ENCODE measurements at regions of chr5 and their contacts with region 1.

Region 1: DNA sequence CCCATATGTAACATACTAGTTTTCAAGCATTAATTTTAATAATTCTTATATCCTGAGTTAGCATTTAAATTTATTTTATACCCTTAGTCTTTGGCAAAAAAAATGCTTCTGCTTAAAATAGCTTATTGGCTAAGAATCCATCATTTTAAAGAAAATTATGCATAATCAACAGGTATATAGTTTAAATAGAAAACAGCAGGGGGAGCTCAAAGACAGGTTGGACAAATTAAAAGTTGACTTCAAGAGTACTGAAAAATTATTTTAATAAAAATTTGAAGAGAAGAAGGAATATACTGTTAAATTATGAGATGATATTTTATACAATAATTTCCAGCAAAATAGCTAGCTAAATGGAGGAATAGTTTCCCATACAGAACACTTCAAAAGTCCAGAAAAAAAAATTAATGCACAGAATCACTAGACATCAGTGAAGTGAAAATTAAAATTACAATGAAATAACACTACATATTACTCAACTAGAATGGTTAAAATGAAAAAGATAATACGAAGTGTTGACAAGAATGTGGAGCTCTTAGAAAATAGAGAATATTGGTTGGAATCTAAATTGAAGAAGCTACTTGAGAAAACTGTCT is 387.1 kb downstream of the PDE4D start:
- DNase-seq: no peak
- ATAC-seq: peak; percentile 61; the same call in 2 of the 3 replicates
- H3K4me3 ChIP-seq: no peak overlapping the region
- H3K27ac ChIP-seq: no peak overlapping the region
- H3K4me1 ChIP-seq: no peaks in the 10 kb centered on the region
- H3K27me3 ChIP-seq: no peaks in the 10 kb centered on the region
- CTCF ChIP-seq: peak; percentile 10 to 48 (median 31); a peak in 2 of 6 replicates
- EP300 ChIP-seq: no peak
- POLR2A ChIP-seq: no peak
- RAD21 ChIP-seq: peak; percentile 77

Region 2: DNA sequence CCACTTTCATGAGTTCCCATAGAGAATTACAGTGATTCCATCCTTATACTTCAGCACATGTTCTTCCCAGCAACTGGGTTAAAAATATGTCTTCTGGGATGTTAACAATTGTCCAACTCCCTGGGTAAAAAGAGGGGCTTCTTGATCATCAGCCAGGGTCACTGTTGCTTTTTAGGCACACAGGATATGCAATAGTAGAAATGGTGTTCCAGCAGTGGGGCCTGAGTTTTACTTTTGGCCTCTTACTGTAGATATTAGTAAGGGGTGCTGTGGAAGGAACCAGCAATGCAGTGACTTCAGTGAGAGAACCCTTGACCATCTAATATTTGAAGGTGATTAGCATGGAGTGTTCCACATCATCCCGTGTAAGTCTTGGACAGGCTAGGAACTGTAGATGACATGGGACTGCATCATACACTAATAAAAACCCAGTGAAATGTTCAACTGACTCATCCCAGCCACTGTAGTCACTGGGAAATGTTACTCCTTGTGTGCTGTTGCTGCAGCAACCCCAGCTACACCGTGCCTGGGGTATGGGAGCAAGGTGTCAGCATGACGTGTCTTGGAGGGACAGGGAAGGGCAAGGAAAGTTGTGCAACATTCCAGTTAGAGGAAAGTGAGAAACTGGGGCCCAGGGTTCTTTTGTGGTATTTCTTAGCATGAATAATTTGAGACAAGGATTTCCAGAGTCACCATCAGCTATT is 312.6 kb before region 1 on chr5:
- CTCF ChIA-PET with region 1: no interaction called
- POLR2A ChIA-PET with region 1: no interaction called
- RAD21 ChIA-PET with region 1: no interaction called
- SMC1A ChIA-PET with region 1: no interaction called
- in situ Hi-C with region 1: no loop called
- intact Hi-C with region 1: no loop called
- DNase-seq: no peak
- ATAC-seq: no peak
- H3K4me3 ChIP-seq: no peak overlapping the region
- H3K27ac ChIP-seq: no peak overlapping the region
- H3K4me1 ChIP-seq: no peaks in the 10 kb centered on the region
- H3K27me3 ChIP-seq: no peaks in the 10 kb centered on the region; a peak in 1 of 4 replicates
- CTCF ChIP-seq: no peak
- EP300 ChIP-seq: no peak
- POLR2A ChIP-seq: no peak
- RAD21 ChIP-seq: no peak

Region 3: DNA sequence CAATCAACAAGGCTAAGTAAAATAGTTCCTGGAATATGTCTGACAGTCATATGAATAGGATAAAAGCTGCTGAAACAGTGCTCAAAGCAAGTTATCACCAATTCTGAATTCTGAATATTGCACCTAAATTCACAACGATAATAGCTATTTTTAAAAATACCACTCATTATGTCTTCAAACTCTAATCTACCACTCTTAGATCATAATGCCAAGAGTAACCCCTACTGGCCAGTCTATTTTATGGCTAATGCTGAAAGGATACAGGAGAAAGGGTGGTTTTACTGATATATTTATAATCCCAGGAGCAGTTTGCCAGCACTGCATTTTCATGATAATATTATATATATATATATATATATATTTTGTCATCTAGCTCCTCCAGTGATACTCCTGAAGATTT is 154.4 kb after region 1 on chr5:
- CTCF ChIA-PET with region 1: interaction called, 92 read pairs
- POLR2A ChIA-PET with region 1: no interaction called
- RAD21 ChIA-PET with region 1: interaction called, 98 read pairs
- SMC1A ChIA-PET with region 1: interaction called, 103 read pairs
- in situ Hi-C with region 1: loop called (anchors 25 kb)
- intact Hi-C with region 1: loop called (anchors 1 kb)
- DNase-seq: no peak
- ATAC-seq: peak; percentile 77
- H3K4me3 ChIP-seq: no peak overlapping the region
- H3K27ac ChIP-seq: no peak overlapping the region
- H3K4me1 ChIP-seq: no peaks in the 10 kb centered on the region
- H3K27me3 ChIP-seq: no peaks in the 10 kb centered on the region
- CTCF ChIP-seq: peak; percentile 25 to 57 (median 42); a peak in 3 of 6 replicates
- EP300 ChIP-seq: no peak
- POLR2A ChIP-seq: no peak
- RAD21 ChIP-seq: peak; percentile 70

Region 4: DNA sequence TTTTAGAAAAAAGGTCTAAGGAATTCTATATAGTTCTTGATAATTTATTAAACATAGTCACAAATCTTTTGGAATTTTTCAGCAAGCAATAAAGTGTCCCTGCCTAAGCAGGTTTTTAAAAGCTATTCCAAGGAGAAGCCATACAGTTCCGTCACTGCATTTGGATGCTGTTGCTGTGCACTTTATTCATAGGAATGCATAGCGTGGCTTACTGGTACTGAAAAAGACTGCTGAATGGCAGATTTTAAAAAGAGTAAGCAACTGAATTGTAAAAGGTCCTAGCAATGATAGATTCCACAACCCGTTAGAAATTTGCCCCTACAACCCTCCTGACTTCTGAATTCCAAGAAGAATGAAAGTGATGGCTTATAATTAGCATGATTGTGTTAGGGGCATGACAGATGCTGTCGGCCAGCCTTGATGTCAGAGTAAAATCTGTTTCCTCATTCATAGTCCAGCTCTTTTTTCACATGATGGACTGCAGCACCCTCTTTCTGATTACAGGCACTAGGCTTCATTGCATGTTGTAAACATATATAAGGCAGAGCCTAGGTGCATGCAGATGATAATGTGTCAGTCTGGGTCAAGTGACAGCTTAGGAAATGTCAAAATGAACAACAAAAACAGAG is 160.2 kb after region 1 on chr5:
- CTCF ChIA-PET with region 1: interaction called, 100 read pairs
- POLR2A ChIA-PET with region 1: no interaction called
- RAD21 ChIA-PET with region 1: interaction called, 98 read pairs
- SMC1A ChIA-PET with region 1: interaction called, 103 read pairs
- in situ Hi-C with region 1: loop called (anchors 25 kb)
- intact Hi-C with region 1: no loop called
- DNase-seq: no peak
- ATAC-seq: peak; percentile 31; the same call in 1 of the 3 replicates
- H3K4me3 ChIP-seq: no peak overlapping the region
- H3K27ac ChIP-seq: no peak overlapping the region
- H3K4me1 ChIP-seq: no peaks in the 10 kb centered on the region
- H3K27me3 ChIP-seq: no peaks in the 10 kb centered on the region
- CTCF ChIP-seq: no peak; a peak in 1 of 6 replicates
- EP300 ChIP-seq: no peak
- POLR2A ChIP-seq: no peak
- RAD21 ChIP-seq: 0 out of 2 replicates have a peak, but pooled peaks have one; percentile 18

Region 5: DNA sequence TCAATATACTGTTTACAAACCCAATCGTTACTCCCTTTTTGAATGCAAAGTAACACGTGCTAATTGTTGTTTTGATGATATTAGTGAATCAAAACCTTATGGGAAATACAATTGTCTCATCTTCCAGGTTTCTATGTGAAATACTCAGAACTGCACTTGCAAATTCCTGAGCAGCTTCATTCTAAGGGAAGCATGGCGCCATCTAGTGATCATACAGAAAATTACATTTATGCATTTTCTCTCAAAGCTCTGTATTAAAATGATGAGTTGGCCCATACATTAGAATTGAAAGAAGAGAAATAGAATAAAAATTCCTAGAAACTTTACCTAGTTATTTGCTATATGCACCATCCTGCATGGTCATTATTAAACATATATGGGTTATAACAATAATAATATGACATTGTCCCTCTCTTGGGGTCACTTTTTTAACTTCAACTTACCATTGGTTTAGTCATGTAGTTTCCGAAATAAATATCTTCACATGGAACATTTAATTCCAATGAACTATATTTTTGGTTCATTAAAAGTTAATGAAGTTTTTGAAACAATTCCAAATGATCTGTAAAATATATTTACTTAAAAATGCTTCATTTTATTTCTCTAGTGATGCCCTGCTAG is 167.2 kb after region 1 on chr5:
- CTCF ChIA-PET with region 1: interaction called, 100 read pairs
- POLR2A ChIA-PET with region 1: interaction called, 4 read pairs
- RAD21 ChIA-PET with region 1: interaction called, 42 read pairs
- SMC1A ChIA-PET with region 1: interaction called, 51 read pairs
- in situ Hi-C with region 1: loop called (anchors 25 kb)
- intact Hi-C with region 1: loop called (anchors 1 kb)
- DNase-seq: no peak
- ATAC-seq: peak; percentile 60
- H3K4me3 ChIP-seq: no peak overlapping the region
- H3K27ac ChIP-seq: no peak overlapping the region
- H3K4me1 ChIP-seq: no peaks in the 10 kb centered on the region
- H3K27me3 ChIP-seq: no peaks in the 10 kb centered on the region
- CTCF ChIP-seq: peak; percentile 54 to 76 (median 65); a peak in 5 of 6 replicates
- EP300 ChIP-seq: no peak
- POLR2A ChIP-seq: no peak
- RAD21 ChIP-seq: peak; percentile 90

Region 6: DNA sequence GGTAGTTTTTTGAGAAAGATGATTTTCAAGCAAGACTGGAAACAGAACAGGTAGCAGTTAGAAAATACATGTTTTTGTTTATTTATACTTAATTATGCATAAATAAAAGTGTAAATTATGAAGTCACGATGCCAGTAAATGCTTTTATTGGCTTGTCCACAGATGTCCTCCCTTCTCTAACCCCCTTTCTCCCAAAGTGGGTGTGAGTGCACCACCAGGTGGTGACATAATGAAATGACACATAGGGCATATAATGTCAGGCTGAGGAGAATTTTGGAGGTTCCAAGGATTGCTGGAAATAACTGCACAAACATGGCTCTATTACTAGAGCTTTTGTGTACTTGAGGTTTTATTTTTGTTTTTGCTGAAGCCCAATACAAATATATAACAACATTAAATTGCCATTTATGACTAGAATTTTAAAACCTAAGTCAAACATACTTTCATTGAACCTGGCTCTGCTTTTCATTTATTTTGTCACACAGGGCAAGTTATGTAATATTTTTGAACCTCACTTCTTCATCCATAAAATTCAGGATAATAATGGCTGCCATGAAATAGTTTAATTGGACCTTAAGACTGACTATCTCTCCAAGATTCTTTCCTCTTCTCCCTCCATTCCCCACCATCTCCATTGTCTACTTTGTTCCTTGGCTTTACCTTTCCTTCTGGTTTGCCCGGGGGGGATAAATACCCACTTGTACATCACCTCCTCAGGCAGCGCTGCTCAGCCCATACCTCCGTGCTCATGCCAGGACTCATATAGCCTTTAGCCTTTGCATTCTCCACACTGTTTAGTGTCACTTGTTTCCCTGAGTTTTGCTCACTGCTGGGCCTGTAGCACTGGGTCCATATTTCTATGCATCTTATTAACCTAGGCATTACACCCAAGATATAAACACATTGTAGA is 218.4 kb after region 1 on chr5:
- CTCF ChIA-PET with region 1: interaction called, 11 read pairs
- POLR2A ChIA-PET with region 1: no interaction called
- RAD21 ChIA-PET with region 1: interaction called, 4 read pairs
- SMC1A ChIA-PET with region 1: interaction called, 6 read pairs
- in situ Hi-C with region 1: no loop called
- intact Hi-C with region 1: loop called (anchors 1 kb)
- DNase-seq: no peak
- ATAC-seq: peak; percentile 91
- H3K4me3 ChIP-seq: no peak overlapping the region
- H3K27ac ChIP-seq: no peak overlapping the region
- H3K4me1 ChIP-seq: no peaks in the 10 kb centered on the region
- H3K27me3 ChIP-seq: no peaks in the 10 kb centered on the region
- CTCF ChIP-seq: peak; percentile 68 to 73 (median 71)
- EP300 ChIP-seq: no peak
- POLR2A ChIP-seq: no peak
- RAD21 ChIP-seq: peak; percentile 80

Region 7: DNA sequence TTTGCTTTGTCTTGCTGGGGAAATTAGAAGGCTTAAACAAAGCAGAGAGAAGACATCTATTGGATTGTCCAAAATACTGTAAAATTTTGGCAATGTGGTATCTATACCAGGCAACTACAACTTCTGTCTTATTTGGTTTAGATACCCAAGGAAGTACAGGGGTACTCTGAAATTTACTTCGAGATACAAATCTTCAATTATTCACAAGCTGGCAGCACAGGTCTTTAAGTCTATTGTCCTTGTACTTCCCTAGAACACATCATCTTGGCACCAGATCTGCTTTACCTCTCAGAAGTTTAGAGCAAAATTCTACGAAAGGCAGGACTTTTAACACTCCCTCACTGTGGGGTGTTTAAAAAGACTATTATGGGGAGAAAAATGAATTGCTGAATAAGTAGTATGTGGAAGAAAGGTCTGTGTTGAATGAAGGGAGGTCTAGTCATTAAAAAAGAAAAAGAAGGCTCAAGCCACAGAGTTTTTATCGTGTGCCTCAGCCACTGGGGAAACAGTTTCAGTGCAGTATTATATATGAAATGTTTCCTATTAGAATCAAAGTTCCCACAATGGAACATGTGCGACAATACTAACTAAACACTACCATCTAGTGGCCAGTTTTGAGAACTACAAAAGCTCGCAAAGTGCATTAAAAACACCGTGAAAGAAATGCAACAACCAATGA is 293.4 kb after region 1 on chr5:
- CTCF ChIA-PET with region 1: interaction called, 21 read pairs
- POLR2A ChIA-PET with region 1: no interaction called
- RAD21 ChIA-PET with region 1: interaction called, 18 read pairs
- SMC1A ChIA-PET with region 1: interaction called, 8 read pairs
- in situ Hi-C with region 1: no loop called
- intact Hi-C with region 1: loop called (anchors 1 kb)
- DNase-seq: peak; percentile 24
- ATAC-seq: peak; percentile 79
- H3K4me3 ChIP-seq: no peak overlapping the region; the same call in 1 of the 2 replicates
- H3K27ac ChIP-seq: no peak overlapping the region
- H3K4me1 ChIP-seq: peaks cover 11% of the 10 kb centered on the region; the same call in 1 of the 2 replicates
- H3K27me3 ChIP-seq: no peaks in the 10 kb centered on the region
- CTCF ChIP-seq: peak; percentile 41 to 71 (median 58); a peak in 5 of 6 replicates
- EP300 ChIP-seq: no peak
- POLR2A ChIP-seq: no peak
- RAD21 ChIP-seq: peak; percentile 82

Measured in GM12878 (cell line).